ENCODE measurements at regions of chr12 and their contacts with region 1.

Region 1: DNA sequence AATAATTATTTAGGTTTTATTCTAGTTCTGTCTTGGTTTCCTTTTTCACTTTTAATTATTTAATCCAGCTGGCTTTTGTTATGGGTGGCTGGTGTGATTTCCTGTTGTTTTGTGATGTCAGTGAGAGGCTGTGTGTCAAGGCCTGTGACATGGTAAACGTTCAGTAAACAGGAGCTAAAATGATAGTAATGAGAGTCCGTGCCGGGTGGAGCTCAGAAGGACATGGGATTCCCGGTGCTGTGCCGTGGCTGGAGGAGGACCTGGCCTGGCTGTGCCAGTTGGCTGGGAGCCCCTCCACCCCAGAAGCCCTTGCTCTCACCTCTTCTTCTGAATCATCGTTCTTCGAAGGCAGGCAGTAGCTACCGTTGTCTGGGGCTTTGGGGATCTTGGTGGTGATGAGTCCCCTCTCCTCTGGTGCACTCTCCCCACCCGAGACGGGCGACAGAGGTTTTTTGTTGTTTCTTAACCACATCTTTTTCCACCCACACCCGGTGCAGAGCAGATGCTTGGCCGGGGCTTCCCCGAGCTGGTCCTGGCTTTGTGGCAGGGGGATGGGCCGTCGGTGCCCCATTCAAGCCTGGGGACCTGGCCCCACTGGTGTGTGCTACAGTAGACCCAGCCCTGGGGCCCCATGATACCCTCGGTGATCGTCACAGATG is 29.1 kb downstream of the SH2B3 start:
- DNase-seq: peak; percentile 82
- H3K4me3 Mint-ChIP-seq: peak overlapping the region; percentile 71
- H3K27ac Mint-ChIP-seq: peak overlapping the region; percentile 97
- H3K4me1 Mint-ChIP-seq: peaks cover 90% of the 10 kb centered on the region
- H3K27me3 Mint-ChIP-seq: peaks cover 2% of the 10 kb centered on the region

Region 2: DNA sequence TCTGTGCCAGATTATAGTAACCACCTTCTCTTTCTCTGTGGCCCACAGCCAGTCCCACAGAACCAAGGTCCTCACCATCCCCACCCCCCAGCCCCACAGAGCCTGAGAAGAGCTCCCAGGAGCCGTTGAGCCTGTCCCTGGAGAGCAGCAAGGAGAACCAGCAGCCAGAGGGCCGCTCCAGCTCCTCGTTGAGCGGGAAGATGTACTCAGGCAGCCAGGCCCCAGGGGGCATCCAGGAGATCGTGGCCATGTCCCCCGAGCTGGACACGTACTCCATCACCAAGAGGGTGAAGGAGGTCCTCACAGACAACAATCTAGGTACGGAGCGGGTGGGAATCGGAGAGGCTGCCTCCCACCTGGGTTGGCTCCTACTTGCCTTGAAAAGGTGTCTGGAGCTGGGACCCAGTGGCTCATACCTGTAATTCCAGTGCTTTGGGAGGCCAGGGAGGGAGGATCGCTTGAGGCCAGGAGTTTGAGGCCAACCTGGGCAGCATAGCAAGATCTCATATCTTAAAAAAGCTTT is 100.4 kb before region 1 on chr12:
- CTCF ChIA-PET with region 1: no interaction called
- POLR2A ChIA-PET with region 1: no interaction called
- DNase-seq: no peak
- H3K4me3 Mint-ChIP-seq: no peak overlapping the region
- H3K27ac Mint-ChIP-seq: no peak overlapping the region
- H3K4me1 Mint-ChIP-seq: no peaks in the 10 kb centered on the region
- H3K27me3 Mint-ChIP-seq: peaks cover 8% of the 10 kb centered on the region

Region 3: DNA sequence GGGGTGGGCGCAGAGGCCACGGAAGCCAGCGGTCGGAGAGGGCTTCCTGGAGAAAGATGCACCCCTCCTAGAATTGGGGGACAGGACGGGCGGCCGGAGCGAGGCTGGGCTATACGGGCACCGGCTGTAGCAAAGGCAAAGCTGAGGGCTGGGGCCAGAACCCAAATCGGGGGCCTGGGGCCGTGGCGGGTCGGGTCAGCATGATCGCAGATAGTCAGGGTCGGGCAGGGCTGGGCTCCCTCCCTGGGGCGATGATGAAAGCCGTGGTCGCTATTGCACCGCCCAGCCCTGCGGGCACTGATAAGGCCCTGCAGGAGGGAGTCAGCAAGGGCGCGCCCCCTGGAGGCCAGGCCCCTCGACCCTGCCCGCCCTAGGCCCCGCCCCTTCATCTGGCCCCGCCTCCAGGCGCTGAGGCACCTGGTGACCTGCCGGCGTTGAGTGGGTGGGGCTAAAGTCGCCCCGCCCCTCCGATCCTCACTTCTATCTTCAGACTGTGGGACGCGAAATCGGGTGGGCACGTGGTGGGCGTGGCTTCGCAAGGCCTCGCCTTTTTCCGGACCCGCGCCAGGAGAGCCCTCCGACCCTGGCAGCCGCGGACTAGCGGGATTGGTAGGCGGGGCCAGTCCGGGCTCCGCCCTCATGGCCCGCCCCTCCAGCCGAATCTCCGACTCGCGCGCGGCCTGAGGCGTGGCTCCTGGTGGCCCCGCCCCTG is 29.5 kb before region 1 on chr12:
- CTCF ChIA-PET with region 1: interaction called, 28 read pairs
- POLR2A ChIA-PET with region 1: interaction called, 237 read pairs
- DNase-seq: peak; percentile 98
- H3K4me3 Mint-ChIP-seq: peak overlapping the region; percentile 81
- H3K27ac Mint-ChIP-seq: peak overlapping the region; percentile 72
- H3K4me1 Mint-ChIP-seq: peaks cover 62% of the 10 kb centered on the region
- H3K27me3 Mint-ChIP-seq: peaks cover 29% of the 10 kb centered on the region

Region 4: DNA sequence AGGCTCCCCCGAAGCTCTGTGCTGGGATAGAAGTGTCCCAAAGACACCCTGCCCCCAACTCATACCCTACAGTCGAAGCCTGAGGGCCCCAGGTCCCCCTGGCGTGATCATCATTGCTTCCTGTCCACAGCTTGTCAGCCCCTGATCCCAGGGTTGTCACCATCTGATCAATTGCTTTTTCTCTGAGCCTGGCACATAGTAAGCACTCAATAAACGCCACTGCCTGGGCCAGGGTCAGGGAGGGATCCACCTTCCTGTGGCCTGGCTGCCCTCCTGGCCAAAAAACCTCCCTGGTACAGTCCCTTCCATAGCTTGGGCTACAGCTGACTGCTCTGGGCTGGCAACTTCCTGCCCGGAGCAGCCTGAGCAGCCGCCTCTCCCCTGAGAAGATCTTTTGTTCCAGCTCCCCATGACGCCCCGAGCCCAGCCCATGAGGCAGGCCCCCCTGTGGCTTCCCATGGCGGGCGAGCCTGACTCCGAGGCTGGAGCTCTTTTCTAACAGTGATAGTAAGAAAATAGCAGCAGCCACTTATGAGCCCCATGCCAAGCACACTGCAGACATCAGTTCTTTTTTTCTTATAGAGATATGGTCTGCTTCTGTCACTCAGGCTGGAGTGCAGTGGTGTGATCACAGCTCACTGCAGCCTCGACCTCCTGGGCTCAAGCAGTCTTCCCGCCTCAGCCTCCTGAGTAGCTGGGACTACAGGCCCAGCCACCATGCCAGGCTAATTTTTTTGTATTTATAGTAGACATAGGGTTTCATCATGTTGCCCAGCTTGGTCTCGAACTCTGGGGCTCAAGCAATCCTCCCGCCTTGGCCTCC is 22.6 kb before region 1 on chr12:
- CTCF ChIA-PET with region 1: interaction called, 20 read pairs
- POLR2A ChIA-PET with region 1: interaction called, 237 read pairs
- DNase-seq: no peak
- H3K4me3 Mint-ChIP-seq: no peak overlapping the region
- H3K27ac Mint-ChIP-seq: peak overlapping the region; percentile 72
- H3K4me1 Mint-ChIP-seq: peaks cover 66% of the 10 kb centered on the region
- H3K27me3 Mint-ChIP-seq: no peaks in the 10 kb centered on the region

Region 5: GRCh38 chr12:111444925-111445725 is 10.3 kb after region 1 on chr12:
- CTCF ChIA-PET with region 1: interaction called, 42 read pairs
- POLR2A ChIA-PET with region 1: interaction called, 252 read pairs
- DNase-seq: peak; percentile 93
- H3K4me3 Mint-ChIP-seq: peak overlapping the region; percentile 48
- H3K27ac Mint-ChIP-seq: peak overlapping the region; percentile 84
- H3K4me1 Mint-ChIP-seq: peaks cover 72% of the 10 kb centered on the region
- H3K27me3 Mint-ChIP-seq: peaks cover 1% of the 10 kb centered on the region

Region 6: GRCh38 chr12:111757361-111758119 is 322.7 kb after region 1 on chr12:
- CTCF ChIA-PET with region 1: no interaction called
- POLR2A ChIA-PET with region 1: no interaction called
- DNase-seq: no peak
- H3K4me3 Mint-ChIP-seq: no peak overlapping the region
- H3K27ac Mint-ChIP-seq: no peak overlapping the region
- H3K4me1 Mint-ChIP-seq: peaks cover 12% of the 10 kb centered on the region
- H3K27me3 Mint-ChIP-seq: peaks cover 10% of the 10 kb centered on the region